ENCODE measurements at regions of chr11 and their contacts with region 1.

Region 1: DNA sequence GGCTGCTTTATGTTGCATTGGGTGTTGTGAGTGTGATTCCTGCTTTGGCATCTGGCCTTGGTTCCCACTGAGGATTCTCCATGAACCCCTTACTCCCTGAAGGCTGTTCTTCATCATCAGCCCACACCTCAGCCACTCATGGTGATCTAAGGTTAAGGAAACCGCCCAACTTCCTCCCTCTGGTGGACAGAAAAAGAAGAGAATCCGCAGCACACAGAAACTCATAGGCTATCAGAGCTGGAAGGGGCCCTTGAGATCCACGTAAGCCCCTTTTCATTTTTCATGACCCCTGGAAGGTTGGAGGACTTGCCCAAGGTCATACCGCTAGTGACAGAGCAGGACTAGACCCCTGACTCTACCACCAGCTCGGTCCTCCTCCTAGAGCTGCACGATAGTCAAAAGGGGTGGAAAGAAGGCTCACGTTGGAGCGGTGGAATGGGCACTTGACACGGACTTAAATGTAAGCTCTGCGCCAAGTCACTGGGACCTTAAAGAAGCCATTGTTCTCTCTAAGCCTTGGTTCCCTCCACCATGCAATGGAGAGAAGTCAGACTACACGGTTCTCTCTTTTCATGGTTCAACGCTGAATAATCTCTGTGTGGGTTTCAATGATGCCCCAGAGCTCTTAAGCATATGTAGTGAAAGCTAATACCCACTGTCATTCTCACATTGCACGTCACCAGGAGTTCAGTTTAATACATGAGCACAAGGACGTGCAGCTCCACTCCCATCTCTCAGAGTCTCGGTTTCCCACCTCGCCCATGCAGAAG is 83.6 kb upstream of the CRTAM start:
- DNase-seq: peak; percentile 82
- H3K4me3 ChIP-seq: no peak overlapping the region
- H3K27ac ChIP-seq: peak overlapping the region; percentile 70
- H3K4me1 ChIP-seq: peaks cover 71% of the 10 kb centered on the region
- CTCF ChIP-seq: peak; percentile 88

Region 2: GRCh38 chr11:122637541-122637940 is 117.2 kb before region 1 on chr11:
- CTCF ChIA-PET with region 1: interaction called, 32 read pairs
- POLR2A ChIA-PET with region 1: interaction called, 29 read pairs
- intact Hi-C with region 1: loop called (anchors 1 kb)
- DNase-seq: peak; percentile 35
- H3K4me3 ChIP-seq: no peak overlapping the region
- H3K27ac ChIP-seq: no peak overlapping the region
- H3K4me1 ChIP-seq: peaks cover 26% of the 10 kb centered on the region
- CTCF ChIP-seq: no peak

Region 3: DNA sequence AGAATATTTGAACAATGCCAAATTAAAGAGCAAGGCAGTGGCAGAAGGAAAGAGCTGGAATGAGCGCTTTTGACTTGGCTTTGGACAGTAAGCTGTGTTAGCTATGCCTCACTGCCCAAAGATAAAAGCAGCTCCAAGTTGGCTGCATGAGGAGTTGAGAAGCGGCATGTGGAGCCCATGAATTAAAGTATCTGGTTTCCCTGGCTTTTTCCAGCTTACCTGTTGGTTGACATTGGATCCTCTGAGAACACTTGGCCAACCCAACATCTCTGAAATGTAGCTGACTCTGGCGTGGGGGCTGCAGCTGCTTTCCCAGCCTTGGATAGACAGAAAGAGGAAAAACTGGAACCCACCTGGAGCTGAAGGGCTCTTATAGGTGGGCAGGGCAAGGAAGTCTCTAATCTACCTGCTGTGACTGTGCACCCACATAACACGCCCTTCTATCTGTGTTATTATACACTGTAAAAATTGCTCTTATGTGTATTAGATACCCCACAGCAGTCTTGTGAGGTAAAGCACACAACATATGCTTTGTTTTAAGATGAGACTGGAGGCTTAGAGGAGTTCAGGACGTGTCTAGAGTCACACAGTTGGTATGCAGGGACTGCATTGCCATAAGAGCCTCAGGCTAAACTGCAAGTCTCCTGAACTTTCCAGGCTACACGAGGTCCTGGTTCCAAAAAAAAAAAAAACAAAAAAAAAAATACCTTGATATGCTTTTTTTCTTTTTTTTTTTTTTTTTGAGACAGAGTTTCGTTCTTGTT is 93.4 kb before region 1 on chr11:
- CTCF ChIA-PET with region 1: interaction called, 30 read pairs
- POLR2A ChIA-PET with region 1: interaction called, 56 read pairs
- intact Hi-C with region 1: no loop called
- DNase-seq: no peak
- H3K4me3 ChIP-seq: no peak overlapping the region
- H3K27ac ChIP-seq: no peak overlapping the region
- H3K4me1 ChIP-seq: peaks cover 94% of the 10 kb centered on the region
- CTCF ChIP-seq: no peak

Region 4: GRCh38 chr11:122697636-122698167 is 57.0 kb before region 1 on chr11:
- CTCF ChIA-PET with region 1: interaction called, 32 read pairs
- POLR2A ChIA-PET with region 1: interaction called, 58 read pairs
- intact Hi-C with region 1: loop called (anchors 1 kb)
- DNase-seq: peak; percentile 98
- H3K4me3 ChIP-seq: peak overlapping the region; percentile 64
- H3K27ac ChIP-seq: peak overlapping the region; percentile 99
- H3K4me1 ChIP-seq: peaks cover 96% of the 10 kb centered on the region
- CTCF ChIP-seq: no peak

Region 5: DNA sequence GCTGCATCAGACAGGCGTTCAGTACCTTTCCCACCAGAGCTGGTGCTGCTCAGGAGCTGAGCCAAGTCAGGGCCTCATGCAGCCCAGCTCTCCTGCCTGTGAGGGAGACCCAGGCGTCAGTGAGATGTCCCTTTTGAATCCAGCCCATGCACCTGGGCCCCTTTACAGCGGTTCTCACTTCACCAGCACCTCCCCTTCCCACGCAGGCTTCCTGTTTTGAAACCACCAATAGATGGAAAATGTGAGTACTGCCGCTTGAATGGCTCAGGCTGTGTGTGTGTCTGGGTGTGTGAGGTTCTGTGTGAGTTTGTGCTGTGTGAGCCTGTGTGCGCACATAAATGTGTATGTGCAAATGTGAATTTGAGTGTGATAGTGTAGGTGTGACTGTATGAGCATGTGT is 10.8 kb before region 1 on chr11:
- CTCF ChIA-PET with region 1: interaction called, 20 read pairs
- POLR2A ChIA-PET with region 1: interaction called, 36 read pairs
- intact Hi-C with region 1: no loop called
- DNase-seq: peak; percentile 92
- H3K4me3 ChIP-seq: peak overlapping the region; percentile 53
- H3K27ac ChIP-seq: peak overlapping the region; percentile 85
- H3K4me1 ChIP-seq: peaks cover 89% of the 10 kb centered on the region
- CTCF ChIP-seq: no peak

Region 6: GRCh38 chr11:122853971-122854446 is 99.3 kb after region 1 on chr11:
- CTCF ChIA-PET with region 1: interaction called, 16 read pairs
- POLR2A ChIA-PET with region 1: interaction called, 4 read pairs
- intact Hi-C with region 1: loop called (anchors 2 kb)
- DNase-seq: peak; percentile 74
- H3K4me3 ChIP-seq: no peak overlapping the region
- H3K27ac ChIP-seq: no peak overlapping the region
- H3K4me1 ChIP-seq: peaks cover 15% of the 10 kb centered on the region
- CTCF ChIP-seq: peak; percentile 97

Region 7: GRCh38 chr11:123159183-123159857 is 404.6 kb after region 1 on chr11:
- CTCF ChIA-PET with region 1: no interaction called
- POLR2A ChIA-PET with region 1: no interaction called
- intact Hi-C with region 1: no loop called
- DNase-seq: no peak
- H3K4me3 ChIP-seq: no peak overlapping the region
- H3K27ac ChIP-seq: no peak overlapping the region
- H3K4me1 ChIP-seq: no peaks in the 10 kb centered on the region
- CTCF ChIP-seq: no peak

Measured in OCI-LY7 (cell line).